T-cell (primary cell): ENCODE measurements at regions of chr15 and their contacts with region 1.

Region 1: DNA sequence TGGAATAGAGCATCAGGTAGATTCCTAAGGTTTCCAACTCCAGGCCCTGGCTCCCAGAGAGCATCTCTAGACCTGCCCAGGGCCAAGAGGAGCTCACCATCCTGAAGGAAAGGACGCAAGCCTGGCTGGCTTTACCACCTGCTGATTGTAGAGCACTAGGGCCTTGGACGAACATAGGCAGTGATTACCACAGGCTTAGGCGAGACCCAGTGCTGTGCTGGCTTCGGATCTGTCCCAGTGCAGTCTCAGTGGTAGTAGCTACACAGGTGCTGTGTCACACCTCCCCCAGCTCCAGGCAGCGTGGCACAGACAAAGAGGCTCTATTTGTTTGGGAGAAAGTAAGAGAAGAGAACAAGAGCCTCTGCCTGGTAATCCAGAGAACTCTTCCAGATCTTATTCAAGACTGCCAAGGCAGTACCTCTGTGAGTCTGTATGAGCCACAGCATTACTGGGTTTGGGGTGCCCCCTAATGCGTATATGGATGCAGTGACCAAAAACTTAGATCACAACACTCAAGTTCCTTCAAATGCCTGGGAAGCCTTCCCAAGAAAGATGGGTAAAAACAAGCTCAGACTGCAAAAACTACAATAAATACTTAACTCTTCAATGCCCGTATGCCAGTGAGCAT is 25.4 kb downstream of the ISG20 start:
- DNase-seq: peak in 34 of 35 experiments; percentile 28 to 79 (median 52)
- ATAC-seq: peak; percentile 63 to 95 (median 94)
- H3K4me3 ChIP-seq: no peak overlapping the region
- H3K4me3 Mint-ChIP-seq: no peak overlapping the region
- H3K27ac ChIP-seq: no peak overlapping the region
- H3K27ac Mint-ChIP-seq: peak overlapping the region; percentile 71 to 81
- H3K4me1 ChIP-seq: peaks cover 0 to 20% of the 10 kb centered on the region in 2 experiments
- H3K4me1 Mint-ChIP-seq: peaks cover 32 to 40% (median 36%) of the 10 kb centered on the region in 3 donors
- H3K27me3 ChIP-seq: no peaks in the 10 kb centered on the region
- H3K27me3 Mint-ChIP-seq: peaks cover 8 to 13% of the 10 kb centered on the region in 2 donors

Region 2: GRCh38 chr15:88238618-88239430 is 425.4 kb before region 1 on chr15:
- CTCF ChIA-PET with region 1: no interaction called
- POLR2A ChIA-PET with region 1: no interaction called
- DNase-seq: no peak
- ATAC-seq: no peak
- H3K4me3 ChIP-seq: no peak overlapping the region
- H3K4me3 Mint-ChIP-seq: no peak overlapping the region
- H3K27ac ChIP-seq: no peak overlapping the region
- H3K27ac Mint-ChIP-seq: no peak overlapping the region
- H3K4me1 ChIP-seq: no peaks in the 10 kb centered on the region
- H3K4me1 Mint-ChIP-seq: no peaks in the 10 kb centered on the region
- H3K27me3 ChIP-seq: peaks cover 0 to 30% of the 10 kb centered on the region in 2 experiments
- H3K27me3 Mint-ChIP-seq: peaks cover 27 to 28% of the 10 kb centered on the region in 2 donors

Region 3: GRCh38 chr15:88620995-88621772 is 43.1 kb before region 1 on chr15 and contains the start of gene AEN:
- CTCF ChIA-PET with region 1: interaction called, 23 to 24 read pairs
- POLR2A ChIA-PET with region 1: no interaction called
- DNase-seq: peak; percentile 86 to 97 (median 92)
- ATAC-seq: peak; percentile 86 to 94 (median 91)
- H3K4me3 ChIP-seq: peak within 1 kb of the TSS; percentile 70 to 76
- H3K4me3 Mint-ChIP-seq: peak within 1 kb of the TSS; percentile 86 to 92 (median 89)
- H3K27ac ChIP-seq: peak within 1 kb of the TSS; percentile 91
- H3K27ac Mint-ChIP-seq: peak within 1 kb of the TSS; percentile 91 to 96
- H3K4me1 ChIP-seq: peaks cover 28 to 54% of the 10 kb centered on the region in 2 experiments
- H3K4me1 Mint-ChIP-seq: peaks cover 47 to 49% (median 48%) of the 10 kb centered on the region in 3 donors
- H3K27me3 ChIP-seq: peaks cover 0 to 4% of the 10 kb centered on the region in 2 experiments
- H3K27me3 Mint-ChIP-seq: peaks cover 3 to 5% of the 10 kb centered on the region in 2 donors
- total RNA-seq, gene AEN: 31.1 to 69.2 (median 51.5) TPM

Region 4: GRCh38 chr15:88738796-88739195 is 74.5 kb after region 1 on chr15:
- CTCF ChIA-PET with region 1: no interaction called
- POLR2A ChIA-PET with region 1: no interaction called
- DNase-seq: no peak
- ATAC-seq: no peak
- H3K4me3 ChIP-seq: no peak overlapping the region
- H3K4me3 Mint-ChIP-seq: no peak overlapping the region
- H3K27ac ChIP-seq: no peak overlapping the region
- H3K27ac Mint-ChIP-seq: no peak overlapping the region
- H3K4me1 ChIP-seq: no peaks in the 10 kb centered on the region
- H3K4me1 Mint-ChIP-seq: no peaks in the 10 kb centered on the region
- H3K27me3 ChIP-seq: peaks cover 0 to 30% of the 10 kb centered on the region in 2 experiments
- H3K27me3 Mint-ChIP-seq: peaks cover 33 to 36% of the 10 kb centered on the region in 2 donors